Activated CD8-positive, alpha-beta T cell treated with anti-CD3 and anti-CD28 coated beads, Interleukin-2, amount 10 ng/mL, durations not matched to agents 7 days and 5 days (primary cell): ENCODE measurements at regions of chr4 and their contacts with region 1.

Region 1: GRCh38 chr4:98467627-98468072 is 190.8 kb downstream of the TSPAN5 start:
- DNase-seq: peak; percentile 81
- ATAC-seq: peak; percentile 92
- H3K4me3 Mint-ChIP-seq: peak overlapping the region; percentile 62
- H3K27ac Mint-ChIP-seq: peak overlapping the region; percentile 69
- H3K4me1 Mint-ChIP-seq: peaks cover 33% of the 10 kb centered on the region
- H3K27me3 Mint-ChIP-seq: no peaks in the 10 kb centered on the region

Region 2: GRCh38 chr4:98394134-98394533 is 73.5 kb before region 1 on chr4:
- CTCF ChIA-PET with region 1: no interaction called
- POLR2A ChIA-PET with region 1: no interaction called
- DNase-seq: no peak
- ATAC-seq: no peak
- H3K4me3 Mint-ChIP-seq: no peak overlapping the region
- H3K27ac Mint-ChIP-seq: no peak overlapping the region
- H3K4me1 Mint-ChIP-seq: no peaks in the 10 kb centered on the region
- H3K27me3 Mint-ChIP-seq: no peaks in the 10 kb centered on the region

Region 3: GRCh38 chr4:98446499-98447375 is 20.9 kb before region 1 on chr4:
- CTCF ChIA-PET with region 1: interaction called, 18 read pairs
- POLR2A ChIA-PET with region 1: no interaction called
- DNase-seq: peak; percentile 85
- ATAC-seq: peak; percentile 94
- H3K4me3 Mint-ChIP-seq: peak overlapping the region; percentile 47
- H3K27ac Mint-ChIP-seq: peak overlapping the region; percentile 94
- H3K4me1 Mint-ChIP-seq: peaks cover 47% of the 10 kb centered on the region
- H3K27me3 Mint-ChIP-seq: no peaks in the 10 kb centered on the region

Region 4: GRCh38 chr4:98452091-98452490 is 15.6 kb before region 1 on chr4:
- CTCF ChIA-PET with region 1: interaction called, 18 read pairs
- POLR2A ChIA-PET with region 1: no interaction called
- DNase-seq: no peak
- ATAC-seq: no peak
- H3K4me3 Mint-ChIP-seq: no peak overlapping the region
- H3K27ac Mint-ChIP-seq: no peak overlapping the region
- H3K4me1 Mint-ChIP-seq: peaks cover 46% of the 10 kb centered on the region
- H3K27me3 Mint-ChIP-seq: no peaks in the 10 kb centered on the region

Region 5: GRCh38 chr4:98482847-98483806 is 15.5 kb after region 1 on chr4:
- CTCF ChIA-PET with region 1: interaction called, 21 read pairs
- POLR2A ChIA-PET with region 1: no interaction called
- DNase-seq: no peak
- ATAC-seq: no peak
- H3K4me3 Mint-ChIP-seq: no peak overlapping the region
- H3K27ac Mint-ChIP-seq: peak overlapping the region; percentile 8
- H3K4me1 Mint-ChIP-seq: peaks cover 34% of the 10 kb centered on the region
- H3K27me3 Mint-ChIP-seq: no peaks in the 10 kb centered on the region